ENCODE measurements at regions of chr1 and their contacts with region 1.

Region 1: GRCh38 chr1:241048622-241049021 is 308.4 kb downstream of the RGS7 start:
- DNase-seq: no peak
- ATAC-seq: no peak
- H3K4me3 ChIP-seq: no peak overlapping the region
- H3K27ac ChIP-seq: no peak overlapping the region
- H3K4me1 ChIP-seq: no peaks in the 10 kb centered on the region
- H3K27me3 ChIP-seq: no peaks in the 10 kb centered on the region
- CTCF ChIP-seq: no peak

Region 2: GRCh38 chr1:241012708-241013340 is 35.8 kb before region 1 on chr1:
- intact Hi-C with region 1: no loop called
- DNase-seq: no peak
- ATAC-seq: no peak
- H3K4me3 ChIP-seq: no peak overlapping the region
- H3K27ac ChIP-seq: no peak overlapping the region
- H3K4me1 ChIP-seq: no peaks in the 10 kb centered on the region
- H3K27me3 ChIP-seq: no peaks in the 10 kb centered on the region
- CTCF ChIP-seq: no peak

Region 3: DNA sequence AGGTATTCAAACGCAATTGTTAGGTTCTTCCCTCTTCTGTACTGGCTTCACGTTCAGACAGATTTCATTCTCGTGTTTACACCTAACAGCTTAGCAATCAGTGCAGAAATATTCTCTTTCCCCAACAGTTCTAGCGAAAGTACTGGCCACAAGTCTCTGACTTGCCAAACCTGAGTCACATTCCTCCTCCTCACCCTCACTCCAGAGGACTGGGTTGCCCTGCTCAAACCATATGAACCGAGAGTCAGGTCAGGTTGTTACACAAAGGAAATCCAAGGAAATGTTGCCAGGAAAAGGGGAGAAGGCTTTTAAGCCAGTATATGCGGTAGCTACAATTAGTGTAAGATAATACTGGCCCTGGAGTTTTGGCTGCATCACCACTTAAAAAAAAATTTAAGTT is 25.9 kb after region 1 on chr1:
- intact Hi-C with region 1: loop called in 1 of 2 experiments (anchors 2 kb)
- DNase-seq: no peak
- ATAC-seq: no peak
- H3K4me3 ChIP-seq: no peak overlapping the region
- H3K27ac ChIP-seq: no peak overlapping the region
- H3K4me1 ChIP-seq: no peaks in the 10 kb centered on the region
- H3K27me3 ChIP-seq: no peaks in the 10 kb centered on the region
- CTCF ChIP-seq: no peak